Caco-2 (cell line): ENCODE measurements at regions of chr2 and their contacts with region 1.

Region 1: DNA sequence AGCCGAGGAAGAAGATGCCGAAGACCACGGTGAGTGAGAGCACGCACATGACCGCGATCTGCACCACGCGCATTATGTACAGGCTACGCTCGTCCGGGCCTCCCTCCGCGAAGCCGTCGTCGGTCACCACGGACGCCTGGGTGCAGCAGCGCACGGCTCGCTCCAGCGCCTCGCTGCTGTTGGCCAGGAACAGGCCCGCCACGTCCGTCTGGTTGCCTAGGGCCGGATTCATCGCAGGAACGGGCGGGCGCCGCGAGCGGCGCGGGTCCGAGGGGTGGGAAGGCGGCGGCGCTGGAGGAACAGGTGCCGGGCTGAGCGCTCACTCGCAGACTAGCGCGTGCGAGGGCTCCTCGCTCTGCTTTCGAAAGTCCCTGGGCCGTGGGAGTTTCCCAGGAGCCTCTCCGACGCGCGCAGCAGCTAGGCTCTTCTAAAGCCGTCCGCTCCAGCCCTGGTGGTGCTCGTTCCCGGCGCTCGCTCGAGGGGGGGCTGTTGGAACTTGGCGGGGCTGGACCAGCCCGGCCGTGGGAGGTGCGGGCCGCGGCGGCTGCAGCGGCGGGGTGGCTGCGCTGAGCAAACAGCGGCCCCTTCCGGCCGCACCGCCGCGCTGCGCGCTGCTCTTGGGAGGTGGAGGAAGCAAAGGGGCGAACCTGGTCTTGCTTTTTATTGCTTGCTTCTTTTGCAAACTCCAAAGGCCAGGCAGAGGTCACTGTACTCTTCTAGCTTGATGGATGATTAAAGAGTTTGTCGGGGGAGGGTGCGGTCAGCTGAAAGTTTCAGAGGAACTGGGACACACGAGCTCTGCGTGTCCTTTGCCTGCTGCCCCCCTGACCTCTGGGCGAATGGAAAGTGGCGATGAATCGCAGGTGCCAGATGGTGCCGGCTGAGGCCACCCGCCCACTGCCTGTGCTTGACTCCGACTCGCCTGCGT is at the start of gene RPRM:
- DNase-seq: peak; percentile 51 to 67
- H3K4me3 ChIP-seq: no peak within 1 kb of the TSS
- H3K4me3 Mint-ChIP-seq: peak within 1 kb of the TSS; percentile 61
- H3K27ac Mint-ChIP-seq: no peak within 1 kb of the TSS
- H3K4me1 ChIP-seq: no peaks in the 10 kb centered on the region
- H3K4me1 Mint-ChIP-seq: peaks cover 6% of the 10 kb centered on the region
- H3K27me3 ChIP-seq: no peaks in the 10 kb centered on the region
- H3K27me3 Mint-ChIP-seq: peaks cover 7% of the 10 kb centered on the region
- CTCF ChIP-seq: peak; percentile 51 to 68
- total RNA-seq, gene RPRM: not detected in 2 replicates

Region 2: GRCh38 chr2:152925547-152926327 is 552.9 kb before region 1 on chr2:
- CTCF ChIA-PET with region 1: no interaction called
- POLR2A ChIA-PET with region 1: no interaction called
- intact Hi-C with region 1: loop called (anchors 10 kb)
- DNase-seq: peak; percentile 73 to 79
- H3K4me3 ChIP-seq: no peak overlapping the region
- H3K4me3 Mint-ChIP-seq: no peak overlapping the region
- H3K27ac Mint-ChIP-seq: no peak overlapping the region
- H3K4me1 ChIP-seq: no peaks in the 10 kb centered on the region
- H3K4me1 Mint-ChIP-seq: no peaks in the 10 kb centered on the region
- H3K27me3 ChIP-seq: no peaks in the 10 kb centered on the region
- H3K27me3 Mint-ChIP-seq: peaks cover 11% of the 10 kb centered on the region
- CTCF ChIP-seq: peak; percentile 65 to 90

Region 3: GRCh38 chr2:153163058-153163457 is 315.5 kb before region 1 on chr2:
- CTCF ChIA-PET with region 1: no interaction called
- POLR2A ChIA-PET with region 1: no interaction called
- intact Hi-C with region 1: loop called (anchors 1 kb)
- DNase-seq: peak in 1 of 2 experiments; percentile 55
- H3K4me3 ChIP-seq: no peak overlapping the region
- H3K4me3 Mint-ChIP-seq: no peak overlapping the region
- H3K27ac Mint-ChIP-seq: no peak overlapping the region
- H3K4me1 ChIP-seq: no peaks in the 10 kb centered on the region
- H3K4me1 Mint-ChIP-seq: no peaks in the 10 kb centered on the region
- H3K27me3 ChIP-seq: no peaks in the 10 kb centered on the region
- H3K27me3 Mint-ChIP-seq: peaks cover 4% of the 10 kb centered on the region
- CTCF ChIP-seq: peak; percentile 66 to 67

Region 4: DNA sequence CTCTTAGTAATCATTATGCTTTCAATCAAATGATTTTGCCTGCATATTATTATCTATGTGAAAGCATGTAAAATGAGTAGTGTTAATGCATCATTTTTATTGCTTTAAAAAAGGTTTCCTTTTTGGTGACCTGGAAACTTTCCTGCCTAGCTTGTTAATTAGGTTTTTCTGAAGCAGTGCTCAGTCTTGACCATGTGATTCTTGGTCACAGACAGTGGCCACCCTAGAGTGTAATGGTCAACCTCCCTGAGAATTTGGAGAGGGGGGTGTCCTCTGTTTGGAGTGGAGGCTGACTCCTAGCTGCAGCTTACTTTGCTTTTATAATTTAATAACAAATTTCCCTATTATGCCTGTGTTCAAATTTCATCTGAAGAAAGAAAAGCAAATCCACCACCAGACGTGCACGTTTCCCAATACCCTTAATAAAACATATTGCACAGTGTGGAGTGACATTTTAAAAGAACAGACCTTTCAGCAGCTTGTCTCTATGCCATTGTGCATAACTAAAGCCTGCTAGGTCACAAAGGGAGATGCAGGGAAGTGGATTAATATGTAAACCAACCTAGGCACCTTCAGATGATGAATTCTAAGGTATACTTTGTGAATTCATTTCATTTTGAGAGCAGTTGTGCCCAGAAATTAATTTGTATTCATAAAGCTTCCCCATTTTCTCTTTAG is 130.6 kb before region 1 on chr2:
- CTCF ChIA-PET with region 1: no interaction called
- POLR2A ChIA-PET with region 1: no interaction called
- intact Hi-C with region 1: loop called (anchors 2 kb)
- DNase-seq: no peak
- H3K4me3 ChIP-seq: no peak overlapping the region
- H3K4me3 Mint-ChIP-seq: no peak overlapping the region
- H3K27ac Mint-ChIP-seq: no peak overlapping the region
- H3K4me1 ChIP-seq: no peaks in the 10 kb centered on the region
- H3K4me1 Mint-ChIP-seq: no peaks in the 10 kb centered on the region
- H3K27me3 ChIP-seq: no peaks in the 10 kb centered on the region
- H3K27me3 Mint-ChIP-seq: no peaks in the 10 kb centered on the region
- CTCF ChIP-seq: no peak